Natural killer cell (primary cell): ENCODE measurements at regions of chr4 and their contacts with region 1.

Region 1: GRCh38 chr4:155376387-155377268 is at the start of gene MAP9:
- DNase-seq: peak; percentile 84 to 97
- ATAC-seq: peak; percentile 90 to 95 (median 90)
- H3K4me3 ChIP-seq: peak within 1 kb of the TSS; percentile 75
- H3K4me3 Mint-ChIP-seq: peak within 1 kb of the TSS; percentile 92
- H3K27ac ChIP-seq: peak within 1 kb of the TSS; percentile 87
- H3K27ac Mint-ChIP-seq: peak within 1 kb of the TSS; percentile 89 to 92
- H3K4me1 ChIP-seq: peaks cover 3% of the 10 kb centered on the region
- H3K4me1 Mint-ChIP-seq: peaks cover 9 to 10% of the 10 kb centered on the region in 2 donors
- H3K27me3 ChIP-seq: no peaks in the 10 kb centered on the region
- H3K27me3 Mint-ChIP-seq: no peaks in the 10 kb centered on the region
- CTCF ChIP-seq: no peak
- total RNA-seq, gene MAP9: 9.4 to 17.6 (median 10.6) TPM

Region 2: GRCh38 chr4:153785910-153786721 is 1590.5 kb before region 1 on chr4:
- intact Hi-C with region 1: loop called (anchors 10 kb)
- DNase-seq: peak in 1 of 2 donors; percentile 44
- ATAC-seq: no peak
- H3K4me3 ChIP-seq: no peak overlapping the region
- H3K4me3 Mint-ChIP-seq: no peak overlapping the region
- H3K27ac ChIP-seq: no peak overlapping the region
- H3K27ac Mint-ChIP-seq: no peak overlapping the region
- H3K4me1 ChIP-seq: peaks cover 24% of the 10 kb centered on the region
- H3K4me1 Mint-ChIP-seq: peaks cover under 1 to 11% of the 10 kb centered on the region in 2 donors
- H3K27me3 ChIP-seq: peaks cover 31% of the 10 kb centered on the region
- H3K27me3 Mint-ChIP-seq: peaks cover 71 to 80% of the 10 kb centered on the region in 2 donors
- CTCF ChIP-seq: no peak

Region 3: GRCh38 chr4:155342142-155342541 is 34.5 kb before region 1 on chr4:
- intact Hi-C with region 1: no loop called
- DNase-seq: no peak
- ATAC-seq: no peak
- H3K4me3 ChIP-seq: no peak overlapping the region
- H3K4me3 Mint-ChIP-seq: no peak overlapping the region
- H3K27ac ChIP-seq: no peak overlapping the region
- H3K27ac Mint-ChIP-seq: no peak overlapping the region
- H3K4me1 ChIP-seq: no peaks in the 10 kb centered on the region
- H3K4me1 Mint-ChIP-seq: no peaks in the 10 kb centered on the region
- H3K27me3 ChIP-seq: no peaks in the 10 kb centered on the region
- H3K27me3 Mint-ChIP-seq: no peaks in the 10 kb centered on the region
- CTCF ChIP-seq: no peak

Region 4: GRCh38 chr4:155657169-155657568 is 280.5 kb after region 1 on chr4:
- intact Hi-C with region 1: no loop called
- DNase-seq: no peak
- ATAC-seq: no peak
- H3K4me3 ChIP-seq: no peak overlapping the region
- H3K4me3 Mint-ChIP-seq: no peak overlapping the region
- H3K27ac ChIP-seq: no peak overlapping the region
- H3K27ac Mint-ChIP-seq: no peak overlapping the region
- H3K4me1 ChIP-seq: no peaks in the 10 kb centered on the region
- H3K4me1 Mint-ChIP-seq: no peaks in the 10 kb centered on the region
- H3K27me3 ChIP-seq: no peaks in the 10 kb centered on the region
- H3K27me3 Mint-ChIP-seq: peaks cover 12 to 43% of the 10 kb centered on the region in 2 donors
- CTCF ChIP-seq: no peak

Region 5: DNA sequence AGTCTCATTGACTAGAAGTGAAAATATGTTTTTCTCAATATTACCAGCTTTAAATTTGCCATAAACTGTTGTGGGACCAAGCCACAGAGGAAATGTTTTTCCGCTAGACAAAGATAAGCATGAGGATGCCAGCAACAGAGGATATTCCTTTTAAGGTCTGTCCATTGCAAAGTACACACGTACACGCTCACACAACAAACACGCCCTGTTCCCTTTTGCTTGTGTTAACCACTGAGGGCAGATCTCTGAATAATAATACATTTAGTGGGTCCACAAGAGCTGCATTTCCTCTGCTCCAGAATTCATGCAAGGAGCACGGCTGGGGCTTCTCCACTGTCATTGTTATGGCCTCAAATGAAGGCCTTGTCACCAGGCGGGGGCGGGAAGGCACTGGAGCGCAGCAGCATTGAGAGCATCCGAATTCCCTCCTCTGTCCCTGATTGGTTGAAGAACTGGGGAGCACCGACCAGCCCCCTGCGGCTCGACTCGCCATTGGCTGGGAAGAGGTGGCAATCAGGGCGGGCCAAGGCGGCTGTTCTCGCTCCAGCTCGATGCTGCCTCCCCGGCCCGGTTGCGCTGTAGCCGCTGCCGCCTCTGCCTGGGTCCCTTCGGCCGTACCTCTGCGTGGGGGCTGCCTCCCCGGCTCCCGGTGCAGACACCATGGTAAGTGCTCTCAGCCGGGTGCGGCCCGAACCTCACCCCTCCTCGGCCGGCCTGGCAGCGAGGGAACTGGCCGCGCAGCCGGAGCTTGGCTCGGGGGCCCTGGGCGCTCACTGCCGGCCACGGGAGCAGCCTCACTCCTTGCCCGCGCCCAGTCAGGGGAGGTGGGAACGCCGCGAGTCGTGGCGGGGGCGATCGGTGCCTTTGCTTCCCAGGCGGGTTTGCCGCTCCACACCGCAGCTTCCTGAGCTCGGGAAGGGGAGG is 382.1 kb after region 1 on chr4 and contains the start of gene GUCY1B1:
- intact Hi-C with region 1: loop called (anchors 2 kb)
- DNase-seq: peak; percentile 77 to 91
- ATAC-seq: peak; percentile 96 to 98 (median 96)
- H3K4me3 ChIP-seq: peak within 1 kb of the TSS; percentile 62
- H3K4me3 Mint-ChIP-seq: peak within 1 kb of the TSS; percentile 79
- H3K27ac ChIP-seq: peak within 1 kb of the TSS; percentile 44
- H3K27ac Mint-ChIP-seq: peak within 1 kb of the TSS; percentile 84 to 87
- H3K4me1 ChIP-seq: peaks cover 9% of the 10 kb centered on the region
- H3K4me1 Mint-ChIP-seq: peaks cover 11% of the 10 kb centered on the region in 2 donors
- H3K27me3 ChIP-seq: no peaks in the 10 kb centered on the region
- H3K27me3 Mint-ChIP-seq: no peaks in the 10 kb centered on the region
- CTCF ChIP-seq: peak; percentile 28
- total RNA-seq, gene GUCY1B1: 2.1 to 4.0 (median 2.8) TPM

Region 6: DNA sequence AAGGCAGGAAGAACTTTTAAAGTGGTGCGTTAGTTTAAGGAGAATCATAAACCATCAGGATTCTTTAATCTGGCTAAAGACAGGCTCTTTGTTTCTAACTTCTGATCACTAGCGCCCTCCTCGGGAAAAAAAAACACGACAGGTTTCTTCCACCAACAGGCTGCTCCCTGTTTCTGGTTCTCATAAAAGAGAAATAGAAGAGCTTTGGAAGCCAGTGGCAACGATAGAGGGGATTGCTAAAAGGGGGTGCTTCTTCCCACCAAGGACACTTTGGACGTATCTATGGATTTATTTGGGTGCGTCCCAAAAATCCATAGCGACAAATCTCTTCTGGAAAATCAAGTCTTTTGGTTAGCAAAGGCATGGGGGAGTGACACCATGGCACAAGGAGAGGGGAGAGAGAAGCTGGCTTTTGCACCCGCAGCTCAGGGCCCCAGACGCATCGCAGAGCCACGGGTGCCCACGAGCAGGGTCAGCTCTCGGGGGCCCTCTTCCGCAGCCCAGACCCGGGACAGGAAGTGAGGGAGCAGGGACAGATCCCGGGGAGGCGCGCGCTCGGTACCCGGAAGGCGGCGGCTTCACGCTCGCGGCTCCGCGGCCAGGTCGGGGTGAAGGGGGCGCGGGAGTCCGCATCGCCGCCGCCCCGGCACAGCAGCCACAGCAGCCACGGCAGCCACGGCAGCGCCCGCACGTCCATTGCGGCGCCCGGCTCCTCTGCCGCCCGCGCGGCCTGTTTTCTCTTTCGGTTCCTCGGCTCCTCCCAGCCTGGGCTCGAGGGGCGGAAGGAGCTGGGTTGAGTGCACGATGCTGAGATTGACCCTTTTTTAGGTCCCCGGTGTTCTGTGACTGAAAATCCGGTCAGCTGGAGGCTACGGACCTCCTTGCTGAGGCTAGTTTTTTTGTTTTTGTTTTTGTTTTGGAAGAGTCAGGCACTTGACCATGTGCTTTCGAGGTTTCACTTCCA is 576.8 kb after region 1 on chr4 and contains the start of gene CTSO:
- intact Hi-C with region 1: loop called (anchors 10 kb)
- DNase-seq: peak; percentile 72 to 83
- ATAC-seq: peak; percentile 90 to 91 (median 90)
- H3K4me3 ChIP-seq: peak within 1 kb of the TSS; percentile 95
- H3K4me3 Mint-ChIP-seq: peak within 1 kb of the TSS; percentile 100
- H3K27ac ChIP-seq: peak within 1 kb of the TSS; percentile 95
- H3K27ac Mint-ChIP-seq: peak within 1 kb of the TSS; percentile 99 to 100
- H3K4me1 ChIP-seq: peaks cover 6% of the 10 kb centered on the region
- H3K4me1 Mint-ChIP-seq: peaks cover 5 to 26% of the 10 kb centered on the region in 2 donors
- H3K27me3 ChIP-seq: no peaks in the 10 kb centered on the region
- H3K27me3 Mint-ChIP-seq: peaks cover 3 to 4% of the 10 kb centered on the region in 2 donors
- CTCF ChIP-seq: peak; percentile 62
- total RNA-seq, gene CTSO: 20.3 to 25.2 (median 22.2) TPM